ENCODE measurements at regions of chr11 and their contacts with region 1.

Region 1: GRCh38 chr11:71251761-71252443 is 475 bp downstream of the SHANK2 start:
- DNase-seq: peak; percentile 73
- ATAC-seq: peak; percentile 91
- H3K4me3 Mint-ChIP-seq: peak overlapping the region; percentile 61
- H3K27ac Mint-ChIP-seq: no peak overlapping the region
- H3K4me1 Mint-ChIP-seq: peaks cover 25% of the 10 kb centered on the region
- H3K27me3 Mint-ChIP-seq: peaks cover 53% of the 10 kb centered on the region
- CTCF ChIP-seq: no peak

Region 2: DNA sequence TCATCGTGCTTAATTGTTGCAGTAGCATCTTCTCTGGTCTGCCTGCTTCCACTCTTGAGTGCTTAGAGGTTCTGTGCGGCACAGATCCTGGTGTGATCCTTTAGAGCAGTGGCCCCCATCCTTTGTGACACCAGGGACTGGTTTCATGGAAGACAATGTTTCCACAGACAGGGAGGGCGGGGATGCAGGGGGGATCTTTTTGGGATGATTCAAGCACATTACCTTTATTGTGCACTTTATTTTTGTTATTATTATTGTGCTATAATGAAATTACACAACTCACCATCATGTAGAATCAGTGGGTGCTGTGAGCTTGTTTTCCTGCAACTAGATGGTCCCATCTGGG is 77.2 kb after region 1 on chr11:
- CTCF ChIA-PET with region 1: no interaction called
- POLR2A ChIA-PET with region 1: no interaction called
- intact Hi-C with region 1: no loop called
- DNase-seq: no peak
- ATAC-seq: no peak
- H3K4me3 Mint-ChIP-seq: no peak overlapping the region
- H3K27ac Mint-ChIP-seq: no peak overlapping the region
- H3K4me1 Mint-ChIP-seq: no peaks in the 10 kb centered on the region
- H3K27me3 Mint-ChIP-seq: peaks cover 5% of the 10 kb centered on the region
- CTCF ChIP-seq: no peak

Region 3: GRCh38 chr11:71420455-71421241 is 168.7 kb after region 1 on chr11:
- CTCF ChIA-PET with region 1: no interaction called
- POLR2A ChIA-PET with region 1: no interaction called
- intact Hi-C with region 1: loop called (anchors 10 kb)
- DNase-seq: no peak
- ATAC-seq: no peak
- H3K4me3 Mint-ChIP-seq: no peak overlapping the region
- H3K27ac Mint-ChIP-seq: no peak overlapping the region
- H3K4me1 Mint-ChIP-seq: peaks cover 49% of the 10 kb centered on the region
- H3K27me3 Mint-ChIP-seq: peaks cover 2% of the 10 kb centered on the region
- CTCF ChIP-seq: no peak

Region 4: GRCh38 chr11:71568435-71569349 is 316.8 kb after region 1 on chr11:
- CTCF ChIA-PET with region 1: no interaction called
- POLR2A ChIA-PET with region 1: no interaction called
- intact Hi-C with region 1: no loop called
- DNase-seq: no peak
- ATAC-seq: no peak
- H3K4me3 Mint-ChIP-seq: no peak overlapping the region
- H3K27ac Mint-ChIP-seq: no peak overlapping the region
- H3K4me1 Mint-ChIP-seq: no peaks in the 10 kb centered on the region
- H3K27me3 Mint-ChIP-seq: peaks cover 32% of the 10 kb centered on the region
- CTCF ChIP-seq: no peak

Measured in activated B cell treated with CpG ODN at 0.5 μM for 24 hours (primary cell).